ENCODE measurements at regions of chr2 and their contacts with region 1.

Region 1: DNA sequence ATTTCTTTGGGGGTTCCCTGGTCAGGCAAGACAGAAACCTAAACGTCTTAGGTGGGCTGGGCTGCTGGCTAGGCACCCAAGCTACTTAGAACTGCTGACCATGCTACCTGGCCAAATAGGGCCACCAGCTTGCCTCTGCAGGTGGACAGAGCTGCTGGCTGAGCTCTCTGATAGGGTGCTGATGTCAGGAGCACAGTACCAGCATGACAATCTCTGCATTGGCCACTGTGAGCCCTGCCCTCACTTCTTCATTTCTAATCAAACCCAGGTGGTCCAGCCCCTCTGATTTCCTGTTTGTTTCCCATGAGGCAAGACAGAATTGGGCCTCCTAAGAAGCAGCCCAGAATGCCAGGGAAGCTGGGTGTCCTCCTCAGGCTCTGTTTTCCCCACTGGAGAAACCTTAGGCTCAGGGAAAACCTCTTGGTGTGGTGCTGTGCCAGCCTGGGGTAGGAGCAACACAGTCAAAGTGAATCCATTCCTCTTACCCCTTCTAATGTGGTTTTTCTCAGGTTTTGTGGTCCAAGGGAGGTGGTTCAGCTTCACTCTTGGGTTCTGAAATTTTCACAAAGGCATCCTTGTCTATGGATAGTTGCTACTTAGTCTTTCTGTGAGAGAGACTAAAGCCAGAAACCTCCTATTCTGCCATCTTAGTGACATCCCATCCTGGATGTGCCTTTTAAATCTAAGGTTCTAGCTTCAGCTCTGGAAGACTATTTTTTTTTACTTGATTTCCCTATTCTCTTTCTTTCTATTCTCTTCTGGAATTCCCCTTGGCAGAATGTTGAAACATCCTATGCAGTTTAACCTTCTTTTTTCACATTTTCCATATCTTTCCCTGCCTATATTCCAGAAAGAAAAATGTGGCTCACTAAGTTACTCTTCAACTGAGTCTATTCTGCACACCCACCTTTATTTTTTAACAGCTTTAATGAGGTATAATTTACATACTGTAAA is 15.2 kb downstream of the SP100 start:
- DNase-seq: no peak
- ATAC-seq: peak; percentile 52
- H3K4me3 Mint-ChIP-seq: no peak overlapping the region
- H3K27ac Mint-ChIP-seq: peak overlapping the region; percentile 47
- H3K4me1 Mint-ChIP-seq: peaks cover 60% of the 10 kb centered on the region
- H3K27me3 Mint-ChIP-seq: no peaks in the 10 kb centered on the region
- CTCF ChIP-seq: no peak

Region 2: GRCh38 chr2:230411570-230412370 is 19.5 kb before region 1 on chr2:
- CTCF ChIA-PET with region 1: no interaction called
- POLR2A ChIA-PET with region 1: interaction called, 13 read pairs
- intact Hi-C with region 1: no loop called
- DNase-seq: peak; percentile 59
- ATAC-seq: peak; percentile 60
- H3K4me3 Mint-ChIP-seq: peak overlapping the region; percentile 94
- H3K27ac Mint-ChIP-seq: peak overlapping the region; percentile 96
- H3K4me1 Mint-ChIP-seq: peaks cover 54% of the 10 kb centered on the region
- H3K27me3 Mint-ChIP-seq: no peaks in the 10 kb centered on the region
- CTCF ChIP-seq: no peak